B cell (primary cell): ENCODE measurements at regions of chr1 and their contacts with region 1.

Region 1: GRCh38 chr1:11805447-11806306 is at the starts of genes CLCN6 and MTHFR:
- DNase-seq: peak; percentile 99
- ATAC-seq: peak; percentile 81
- H3K4me3 ChIP-seq: peak within 1 kb of the TSS; percentile 80 to 95 (median 80)
- H3K4me3 Mint-ChIP-seq: peak within 1 kb of the TSS; percentile 99
- H3K27ac ChIP-seq: peak within 1 kb of the TSS; percentile 95 to 99
- H3K27ac Mint-ChIP-seq: peak within 1 kb of the TSS; percentile 99
- H3K4me1 ChIP-seq: peaks cover 63 to 66% of the 10 kb centered on the region in 2 donors
- H3K4me1 Mint-ChIP-seq: peaks cover 73% of the 10 kb centered on the region
- H3K27me3 ChIP-seq: no peaks in the 10 kb centered on the region
- H3K27me3 Mint-ChIP-seq: no peaks in the 10 kb centered on the region
- CTCF ChIP-seq: no peak
- total RNA-seq, gene CLCN6: 99.8 and 105 TPM in 2 replicates
- total RNA-seq, gene MTHFR: 109 and 114 TPM in 2 replicates

Region 2: GRCh38 chr1:10472220-10473144 is 1333.2 kb before region 1 on chr1 and contains the start of gene DFFA:
- CTCF ChIA-PET with region 1: no interaction called
- POLR2A ChIA-PET with region 1: no interaction called
- intact Hi-C with region 1: loop called (anchors 10 kb)
- DNase-seq: peak; percentile 94
- ATAC-seq: peak; percentile 81
- H3K4me3 ChIP-seq: peak within 1 kb of the TSS; percentile 58 to 84 (median 80)
- H3K4me3 Mint-ChIP-seq: peak within 1 kb of the TSS; percentile 87
- H3K27ac ChIP-seq: peak within 1 kb of the TSS; percentile 38 to 74
- H3K27ac Mint-ChIP-seq: peak within 1 kb of the TSS; percentile 88
- H3K4me1 ChIP-seq: peaks cover 34 to 44% of the 10 kb centered on the region in 2 donors
- H3K4me1 Mint-ChIP-seq: peaks cover 46% of the 10 kb centered on the region
- H3K27me3 ChIP-seq: no peaks in the 10 kb centered on the region
- H3K27me3 Mint-ChIP-seq: no peaks in the 10 kb centered on the region
- CTCF ChIP-seq: no peak
- total RNA-seq, gene DFFA: 28.2 and 30.7 TPM in 2 replicates

Region 3: DNA sequence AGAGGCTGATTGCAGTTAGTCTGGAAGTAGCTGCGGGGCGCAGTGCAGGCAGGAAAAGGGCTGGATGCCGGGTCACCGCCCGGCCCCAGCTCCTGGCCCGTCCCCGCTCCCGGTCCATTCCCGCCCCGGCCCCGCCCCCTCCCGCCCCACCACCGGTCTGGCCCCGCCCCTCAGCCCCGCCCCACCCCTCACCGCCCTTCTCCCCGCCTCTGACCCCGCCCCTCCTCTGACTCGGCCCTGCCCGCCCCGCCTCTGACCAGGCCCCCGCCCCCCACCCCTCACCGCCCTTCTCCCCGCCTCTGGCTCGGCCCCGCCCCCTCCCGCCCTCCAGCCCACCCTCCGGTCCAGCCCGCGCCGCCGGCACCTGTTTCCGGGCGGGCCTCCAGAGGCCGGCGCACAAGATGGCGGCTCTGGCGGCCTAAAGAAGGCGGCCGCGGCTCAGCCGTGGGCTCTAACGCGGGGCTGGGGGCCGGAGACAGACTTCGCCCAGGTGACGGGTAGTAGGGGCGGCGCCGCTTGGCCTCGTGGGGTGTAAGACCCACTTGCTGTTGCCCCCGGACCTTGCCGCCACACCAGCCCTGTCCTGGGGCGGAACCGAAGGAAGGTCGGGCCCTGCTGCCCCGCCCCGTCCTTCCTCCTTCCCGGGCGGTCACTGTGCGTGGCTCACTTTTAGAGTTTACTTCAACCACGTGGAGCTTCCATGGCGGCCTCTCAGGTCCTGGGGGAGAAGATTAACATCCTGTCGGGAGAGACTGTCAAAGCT is 532.7 kb before region 1 on chr1 and contains the start of gene UBIAD1:
- CTCF ChIA-PET with region 1: no interaction called
- POLR2A ChIA-PET with region 1: no interaction called
- intact Hi-C with region 1: loop called (anchors 1 kb)
- DNase-seq: peak; percentile 91
- ATAC-seq: peak; percentile 87
- H3K4me3 ChIP-seq: peak within 1 kb of the TSS; percentile 51 to 96 (median 95)
- H3K4me3 Mint-ChIP-seq: peak within 1 kb of the TSS; percentile 87
- H3K27ac ChIP-seq: peak within 1 kb of the TSS; percentile 77 to 96
- H3K27ac Mint-ChIP-seq: peak within 1 kb of the TSS; percentile 96
- H3K4me1 ChIP-seq: peaks cover 17 to 34% of the 10 kb centered on the region in 2 donors
- H3K4me1 Mint-ChIP-seq: peaks cover 30% of the 10 kb centered on the region
- H3K27me3 ChIP-seq: no peaks in the 10 kb centered on the region
- H3K27me3 Mint-ChIP-seq: no peaks in the 10 kb centered on the region
- CTCF ChIP-seq: no peak
- total RNA-seq, gene UBIAD1: 28.1 and 30.9 TPM in 2 replicates

Region 4: DNA sequence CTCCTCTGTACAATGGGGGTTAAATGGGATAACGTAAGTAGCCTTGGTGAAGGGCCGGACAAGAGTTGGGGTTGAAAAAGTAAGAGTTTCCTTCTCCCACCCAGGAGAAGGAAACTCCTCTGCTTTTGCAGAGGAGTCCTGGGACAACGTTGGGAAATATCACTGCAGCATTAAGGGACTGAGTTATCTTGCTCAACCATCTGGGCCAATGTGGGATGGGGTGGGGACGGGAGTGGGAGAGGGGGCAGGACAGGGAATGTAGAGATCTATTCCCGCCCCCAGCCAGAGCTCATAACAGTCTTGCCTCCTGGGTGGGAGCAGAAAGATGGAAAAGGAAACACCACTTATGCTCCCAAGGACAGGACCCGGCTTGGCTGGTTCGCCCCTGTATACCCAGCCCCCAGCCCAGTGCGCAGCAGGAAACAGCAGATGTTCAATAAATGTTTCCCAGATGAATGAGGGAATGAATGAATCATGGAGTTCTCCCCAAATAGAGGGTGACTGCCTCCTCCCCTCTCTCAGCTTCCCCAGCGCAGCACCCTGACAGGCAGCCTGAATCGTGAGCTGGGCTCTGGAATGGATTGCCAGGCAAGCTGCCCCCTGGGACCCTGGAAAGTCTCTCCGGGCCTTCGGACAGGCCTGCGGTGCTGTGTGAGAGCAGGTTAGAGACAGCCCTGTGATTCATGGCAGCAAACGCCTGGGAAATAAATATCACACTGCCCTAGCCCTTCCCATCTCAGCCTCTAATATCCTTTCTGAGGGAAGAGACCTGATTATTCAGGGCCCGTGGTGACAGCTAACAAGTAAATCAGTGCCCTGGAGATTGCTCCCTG is 176.3 kb before region 1 on chr1:
- CTCF ChIA-PET with region 1: no interaction called
- POLR2A ChIA-PET with region 1: no interaction called
- intact Hi-C with region 1: no loop called
- DNase-seq: no peak
- ATAC-seq: no peak
- H3K4me3 ChIP-seq: no peak overlapping the region
- H3K4me3 Mint-ChIP-seq: no peak overlapping the region
- H3K27ac ChIP-seq: no peak overlapping the region
- H3K27ac Mint-ChIP-seq: no peak overlapping the region
- H3K4me1 ChIP-seq: peaks cover 0 to under 1% of the 10 kb centered on the region in 2 donors
- H3K4me1 Mint-ChIP-seq: peaks cover 5% of the 10 kb centered on the region
- H3K27me3 ChIP-seq: peaks cover 0 to 20% (median 0%) of the 10 kb centered on the region in 4 experiments
- H3K27me3 Mint-ChIP-seq: peaks cover 40% of the 10 kb centered on the region
- CTCF ChIP-seq: no peak

Region 5: DNA sequence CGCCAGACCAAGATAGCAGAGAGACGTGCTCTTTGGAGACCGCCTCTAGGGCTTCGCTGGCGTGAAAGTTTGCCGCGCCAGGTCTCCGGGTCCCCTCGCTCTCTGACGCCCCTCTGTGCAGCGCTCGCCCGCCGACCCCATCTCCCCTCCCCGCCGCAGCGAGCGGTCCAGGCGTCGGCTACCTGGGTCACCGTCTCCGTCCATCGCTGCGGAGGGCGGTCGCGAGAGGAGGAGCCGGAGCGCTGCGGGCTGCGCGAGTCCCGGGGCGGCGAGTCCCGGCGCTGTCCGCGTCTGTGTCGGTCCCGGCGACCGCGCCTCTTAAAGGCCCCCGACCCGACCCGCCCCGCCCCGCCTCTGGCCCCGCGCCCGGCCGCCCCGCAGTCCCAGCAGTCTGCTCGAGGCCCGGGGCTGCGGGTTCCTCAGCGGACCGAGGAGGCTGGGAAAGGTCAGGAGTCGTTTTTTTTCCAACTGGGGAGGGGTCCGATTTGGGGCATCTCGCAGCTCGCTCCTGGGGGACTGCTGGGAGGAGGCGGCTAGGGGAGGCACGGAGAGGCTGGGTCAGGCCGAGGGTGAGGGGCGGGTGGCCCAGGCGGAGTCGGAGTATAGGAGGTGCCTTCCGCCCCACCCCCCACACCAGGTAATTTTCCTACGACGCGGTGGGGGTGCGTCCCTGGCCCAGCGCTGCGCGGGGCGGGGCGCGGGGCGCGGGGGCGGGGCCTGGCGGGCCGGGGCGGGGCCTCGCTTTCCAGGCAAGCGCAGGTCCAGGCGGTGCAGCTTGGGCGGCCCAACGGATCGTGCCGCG is 151.3 kb before region 1 on chr1 and contains the starts of genes FBXO2 and FBXO44:
- CTCF ChIA-PET with region 1: no interaction called
- POLR2A ChIA-PET with region 1: no interaction called
- intact Hi-C with region 1: loop called (anchors 1 kb)
- DNase-seq: peak; percentile 77
- ATAC-seq: peak; percentile 86
- H3K4me3 ChIP-seq: peak within 1 kb of the TSS in 4 of 5 experiments; percentile 69 to 82 (median 74)
- H3K4me3 Mint-ChIP-seq: peak within 1 kb of the TSS; percentile 84
- H3K27ac ChIP-seq: peak within 1 kb of the TSS in 1 of 2 donors; percentile 25
- H3K27ac Mint-ChIP-seq: peak within 1 kb of the TSS; percentile 50
- H3K4me1 ChIP-seq: peaks cover 22 to 35% of the 10 kb centered on the region in 2 donors
- H3K4me1 Mint-ChIP-seq: peaks cover 28% of the 10 kb centered on the region
- H3K27me3 ChIP-seq: no peaks in the 10 kb centered on the region
- H3K27me3 Mint-ChIP-seq: no peaks in the 10 kb centered on the region
- CTCF ChIP-seq: no peak
- total RNA-seq, gene FBXO2: 9.6 and 10.7 TPM in 2 replicates
- total RNA-seq, gene FBXO44: 58.6 and 61.5 TPM in 2 replicates

Region 6: DNA sequence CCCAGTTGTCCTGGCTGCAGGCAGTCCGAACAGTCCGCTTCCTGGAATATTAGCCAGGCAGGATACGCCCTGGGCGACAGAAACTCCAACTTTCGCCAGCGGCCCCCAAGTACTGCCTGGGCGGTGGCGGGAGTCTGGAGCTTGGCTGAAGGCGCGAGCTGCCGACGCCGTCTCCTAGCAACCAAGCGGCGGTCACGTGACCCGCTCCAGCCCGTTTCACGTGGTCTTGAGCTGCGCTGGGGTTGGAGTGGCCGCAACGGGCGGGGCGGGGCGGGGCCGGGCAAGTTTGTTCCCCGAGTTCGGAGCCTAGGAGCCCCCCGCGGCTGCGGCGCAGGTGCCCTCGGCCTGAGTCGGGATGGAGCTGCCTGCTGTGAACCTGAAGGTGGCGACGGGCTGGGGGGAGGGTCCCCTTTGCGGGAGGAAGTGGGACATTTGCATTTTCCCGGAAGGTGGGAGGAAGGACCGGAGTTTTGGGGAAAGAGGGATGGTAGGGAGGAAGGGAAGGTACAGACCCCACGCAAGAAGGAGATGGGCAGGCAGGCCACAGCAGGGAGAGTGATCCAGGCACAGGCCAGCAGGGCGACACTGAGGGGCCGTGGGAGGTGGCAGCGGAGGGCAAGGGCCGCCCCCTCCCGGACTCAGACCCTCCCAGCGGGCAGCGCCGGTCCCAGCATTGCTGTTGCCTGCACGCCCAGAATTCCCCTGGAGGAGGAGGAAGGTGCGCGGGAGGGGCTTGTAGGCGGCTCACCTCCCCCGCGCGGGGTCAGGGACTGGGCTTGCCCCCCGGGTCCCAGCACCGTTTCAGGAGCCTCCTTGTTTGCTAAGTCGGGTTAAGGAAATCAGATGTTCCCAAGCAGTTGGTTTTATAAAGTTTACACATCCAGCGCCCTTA is 69.6 kb before region 1 on chr1 and contains the start of gene AGTRAP:
- CTCF ChIA-PET with region 1: interaction called, 3 read pairs
- POLR2A ChIA-PET with region 1: interaction called, 3 read pairs
- intact Hi-C with region 1: loop called (anchors 2 kb)
- DNase-seq: peak; percentile 94
- ATAC-seq: peak; percentile 90
- H3K4me3 ChIP-seq: peak within 1 kb of the TSS; percentile 67 to 99 (median 98)
- H3K4me3 Mint-ChIP-seq: peak within 1 kb of the TSS; percentile 97
- H3K27ac ChIP-seq: peak within 1 kb of the TSS; percentile 14 to 83
- H3K27ac Mint-ChIP-seq: peak within 1 kb of the TSS; percentile 93
- H3K4me1 ChIP-seq: peaks cover 33 to 42% of the 10 kb centered on the region in 2 donors
- H3K4me1 Mint-ChIP-seq: peaks cover 42% of the 10 kb centered on the region
- H3K27me3 ChIP-seq: no peaks in the 10 kb centered on the region
- H3K27me3 Mint-ChIP-seq: no peaks in the 10 kb centered on the region
- CTCF ChIP-seq: no peak
- total RNA-seq, gene AGTRAP: 18.3 and 20.2 TPM in 2 replicates

Region 7: GRCh38 chr1:11784993-11785769 is 20.5 kb before region 1 on chr1:
- CTCF ChIA-PET with region 1: interaction called, 26 read pairs
- POLR2A ChIA-PET with region 1: interaction called, 3 read pairs
- intact Hi-C with region 1: loop called (anchors 1 kb)
- DNase-seq: peak; percentile 74
- ATAC-seq: peak; percentile 82
- H3K4me3 ChIP-seq: peak overlapping the region in 4 of 5 experiments; percentile 23 to 50 (median 36)
- H3K4me3 Mint-ChIP-seq: peak overlapping the region; percentile 68
- H3K27ac ChIP-seq: peak overlapping the region in 1 of 2 donors; percentile 26
- H3K27ac Mint-ChIP-seq: peak overlapping the region; percentile 72
- H3K4me1 ChIP-seq: peaks cover 19 to 23% of the 10 kb centered on the region in 2 donors
- H3K4me1 Mint-ChIP-seq: peaks cover 26% of the 10 kb centered on the region
- H3K27me3 ChIP-seq: no peaks in the 10 kb centered on the region
- H3K27me3 Mint-ChIP-seq: no peaks in the 10 kb centered on the region
- CTCF ChIP-seq: peak; percentile 85

Region 8: DNA sequence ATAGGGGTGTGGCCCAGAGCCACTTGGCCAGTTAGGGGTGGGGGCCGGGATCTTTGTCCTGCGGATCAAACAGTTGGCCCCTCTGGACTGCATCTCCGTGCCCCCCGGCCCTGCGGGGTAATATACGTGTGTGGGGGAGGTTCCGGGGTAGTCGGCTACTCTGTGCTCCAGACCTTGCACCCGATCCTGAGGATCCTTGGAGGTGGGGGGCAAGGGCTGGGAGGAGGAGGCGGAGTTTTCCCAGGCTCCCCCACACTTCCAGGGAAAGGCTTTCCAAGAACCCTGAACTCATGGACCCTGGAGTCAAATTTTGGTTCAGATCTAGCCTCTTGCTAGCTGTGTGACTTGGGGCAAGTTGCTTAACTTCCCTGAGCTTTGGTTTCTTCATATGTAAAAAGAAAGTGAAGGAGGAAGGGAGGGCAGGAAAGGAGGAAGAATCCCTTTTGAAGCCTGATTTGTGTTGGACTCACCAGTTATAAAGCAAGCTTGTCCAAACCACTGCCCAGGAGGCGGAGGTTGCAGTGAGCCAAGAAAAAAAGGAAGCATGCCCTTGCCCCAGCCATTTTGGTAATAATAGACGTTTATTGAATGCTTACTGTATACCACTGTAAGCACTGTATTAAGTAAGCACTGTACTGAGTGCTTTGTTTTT is 214.3 kb after region 1 on chr1:
- CTCF ChIA-PET with region 1: no interaction called
- POLR2A ChIA-PET with region 1: interaction called, 3 read pairs
- intact Hi-C with region 1: loop called (anchors 1 kb)
- DNase-seq: peak; percentile 40
- ATAC-seq: no peak
- H3K4me3 ChIP-seq: peak overlapping the region; percentile 61 to 81 (median 78)
- H3K4me3 Mint-ChIP-seq: peak overlapping the region; percentile 85
- H3K27ac ChIP-seq: peak overlapping the region in 1 of 2 donors; percentile 70
- H3K27ac Mint-ChIP-seq: peak overlapping the region; percentile 79
- H3K4me1 ChIP-seq: peaks cover 9% of the 10 kb centered on the region in 2 donors
- H3K4me1 Mint-ChIP-seq: peaks cover 18% of the 10 kb centered on the region
- H3K27me3 ChIP-seq: no peaks in the 10 kb centered on the region
- H3K27me3 Mint-ChIP-seq: no peaks in the 10 kb centered on the region
- CTCF ChIP-seq: no peak